ENCODE measurements at regions of chr9 and their contacts with region 1.

Region 1: GRCh38 chr9:114906908-114907571 is 23.4 kb downstream of the TNFSF8 start:
- DNase-seq: no peak
- H3K4me3 Mint-ChIP-seq: peak overlapping the region; percentile 67
- H3K27ac Mint-ChIP-seq: peak overlapping the region; percentile 97
- H3K4me1 Mint-ChIP-seq: peaks cover 55% of the 10 kb centered on the region
- H3K27me3 Mint-ChIP-seq: no peaks in the 10 kb centered on the region

Region 2: DNA sequence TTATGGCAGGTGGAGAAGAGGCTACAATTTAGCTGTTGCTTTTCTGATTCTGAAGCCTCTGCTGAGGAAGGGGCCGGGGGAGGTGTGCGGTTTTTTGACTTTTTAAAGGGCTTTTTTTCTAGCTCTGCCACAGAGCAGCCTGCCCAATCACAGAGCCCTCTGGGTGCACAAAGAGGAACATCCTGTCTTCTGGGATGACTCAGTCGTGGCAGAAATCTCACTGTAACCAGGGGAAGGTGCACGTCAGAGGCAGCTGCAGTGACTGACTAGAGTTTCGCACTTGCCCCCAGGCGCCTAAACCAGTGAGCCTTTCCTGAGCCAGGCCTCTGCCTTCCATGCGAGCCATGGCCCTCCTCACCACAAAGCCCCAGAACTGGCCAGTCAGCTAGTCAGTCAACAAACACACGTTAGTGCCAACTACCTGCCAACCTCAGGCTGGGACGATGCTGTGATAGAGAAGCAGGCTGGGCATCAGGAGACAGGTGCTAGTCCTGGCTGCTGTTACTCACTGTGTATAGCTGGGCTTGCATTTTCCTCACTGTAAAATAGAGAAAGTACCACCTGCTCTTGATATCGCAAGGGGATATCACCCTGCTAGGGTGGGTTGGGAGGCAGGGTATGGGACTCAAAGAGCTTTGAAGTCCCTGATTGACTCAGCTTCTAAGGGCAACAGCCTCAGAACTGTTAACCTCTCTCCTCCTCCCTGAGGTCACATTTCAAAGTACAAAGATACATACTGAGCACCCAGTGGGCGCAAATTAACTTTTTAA is 521.4 kb before region 1 on chr9:
- intact Hi-C with region 1: loop called (anchors 5 kb)
- DNase-seq: peak; percentile 89
- H3K4me3 Mint-ChIP-seq: peak overlapping the region; percentile 90
- H3K27ac Mint-ChIP-seq: peak overlapping the region; percentile 93
- H3K4me1 Mint-ChIP-seq: peaks cover 69% of the 10 kb centered on the region
- H3K27me3 Mint-ChIP-seq: no peaks in the 10 kb centered on the region

Region 3: DNA sequence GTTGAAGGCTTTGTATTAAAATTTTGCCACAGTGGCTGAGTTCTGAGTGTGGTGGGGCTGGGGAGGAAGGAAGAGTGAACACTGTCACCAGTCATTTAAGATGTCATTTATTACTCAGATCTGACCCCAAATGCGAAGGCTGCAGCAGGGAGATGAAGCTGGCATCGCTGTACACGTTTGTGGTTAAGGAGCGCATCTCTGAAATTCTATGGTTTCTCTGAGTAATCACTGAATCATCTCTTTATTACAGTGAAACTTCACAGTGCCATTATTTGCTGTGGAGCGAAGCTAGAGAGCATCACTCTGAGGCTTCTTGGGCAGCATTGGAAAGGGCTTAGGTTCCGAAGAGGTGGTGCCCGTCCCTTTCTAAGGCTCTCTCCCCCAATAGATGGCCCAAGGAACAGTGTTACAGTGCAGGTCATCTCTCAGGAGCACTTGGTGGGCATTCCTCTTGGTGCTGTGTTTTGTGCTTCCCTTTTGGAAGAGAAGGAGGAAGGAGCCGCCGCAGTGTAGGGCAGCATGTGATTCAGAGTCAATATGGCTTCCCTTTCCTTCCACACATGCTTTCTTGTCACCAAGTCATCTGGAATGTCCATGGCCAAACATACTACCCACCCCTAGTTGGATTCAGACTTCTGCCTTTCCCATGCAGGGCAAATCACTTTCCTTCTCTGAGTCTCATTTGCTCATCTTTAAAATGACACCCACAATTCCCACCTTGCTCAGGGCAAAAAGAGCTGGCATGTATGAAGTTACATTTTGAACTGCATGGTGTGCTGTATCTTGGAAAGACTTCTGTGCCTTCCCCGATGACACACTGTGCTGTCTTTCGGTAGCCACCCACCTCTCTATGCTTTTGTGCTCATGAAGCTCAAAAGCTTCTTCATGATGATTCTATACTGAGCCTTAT is 215.7 kb before region 1 on chr9:
- intact Hi-C with region 1: loop called (anchors 2 kb)
- DNase-seq: peak; percentile 80
- H3K4me3 Mint-ChIP-seq: peak overlapping the region; percentile 69
- H3K27ac Mint-ChIP-seq: peak overlapping the region; percentile 98
- H3K4me1 Mint-ChIP-seq: peaks cover 93% of the 10 kb centered on the region
- H3K27me3 Mint-ChIP-seq: no peaks in the 10 kb centered on the region

Region 4: GRCh38 chr9:114738581-114739316 is 168.3 kb before region 1 on chr9:
- intact Hi-C with region 1: loop called (anchors 1 kb)
- DNase-seq: peak; percentile 70
- H3K4me3 Mint-ChIP-seq: no peak overlapping the region
- H3K27ac Mint-ChIP-seq: peak overlapping the region; percentile 81
- H3K4me1 Mint-ChIP-seq: peaks cover 73% of the 10 kb centered on the region
- H3K27me3 Mint-ChIP-seq: no peaks in the 10 kb centered on the region

Region 5: DNA sequence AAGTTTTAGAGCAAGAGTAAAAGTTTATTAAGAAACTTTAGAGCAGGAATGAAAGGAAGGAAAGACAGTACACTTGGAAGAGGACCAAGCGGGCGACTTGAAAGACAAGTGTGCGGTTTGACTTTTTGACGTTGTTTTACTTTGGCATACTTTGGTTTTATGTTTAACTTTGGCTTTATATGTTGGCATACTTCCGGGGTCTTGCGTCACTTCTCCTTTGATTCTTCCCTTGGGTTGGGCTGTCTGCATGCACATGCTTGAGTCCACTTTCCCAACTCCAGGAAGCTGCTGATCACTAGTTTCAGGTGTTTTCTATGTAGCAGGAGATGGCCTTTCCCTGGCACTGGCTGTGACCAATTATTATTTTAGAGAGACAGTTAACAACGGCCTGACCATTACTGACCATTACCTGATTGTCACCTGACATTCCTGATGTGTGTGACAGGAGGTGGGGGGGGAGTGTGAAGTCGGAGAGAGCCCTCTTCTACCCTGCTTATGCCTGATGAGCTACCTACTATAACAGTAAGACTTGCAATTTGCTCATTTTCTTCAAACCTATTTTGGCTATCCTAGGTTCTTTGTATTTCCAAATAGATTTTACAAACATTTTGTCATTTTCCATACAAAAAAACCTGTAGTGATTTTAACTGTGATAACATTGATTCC is 22.1 kb before region 1 on chr9:
- intact Hi-C with region 1: no loop called
- DNase-seq: no peak
- H3K4me3 Mint-ChIP-seq: no peak overlapping the region
- H3K27ac Mint-ChIP-seq: no peak overlapping the region
- H3K4me1 Mint-ChIP-seq: peaks cover 22% of the 10 kb centered on the region
- H3K27me3 Mint-ChIP-seq: no peaks in the 10 kb centered on the region

Region 6: GRCh38 chr9:114919611-114920010 is 12.6 kb after region 1 on chr9:
- intact Hi-C with region 1: loop called (anchors 1 kb)
- DNase-seq: no peak
- H3K4me3 Mint-ChIP-seq: peak overlapping the region; percentile 63
- H3K27ac Mint-ChIP-seq: peak overlapping the region; percentile 64
- H3K4me1 Mint-ChIP-seq: peaks cover 94% of the 10 kb centered on the region
- H3K27me3 Mint-ChIP-seq: no peaks in the 10 kb centered on the region

Region 7: GRCh38 chr9:115008536-115009270 is 101.7 kb after region 1 on chr9:
- intact Hi-C with region 1: loop called (anchors 1 kb)
- DNase-seq: peak; percentile 23
- H3K4me3 Mint-ChIP-seq: no peak overlapping the region
- H3K27ac Mint-ChIP-seq: no peak overlapping the region
- H3K4me1 Mint-ChIP-seq: peaks cover 97% of the 10 kb centered on the region
- H3K27me3 Mint-ChIP-seq: no peaks in the 10 kb centered on the region

Region 8: GRCh38 chr9:115146581-115147021 is 239.6 kb after region 1 on chr9:
- intact Hi-C with region 1: no loop called
- DNase-seq: no peak
- H3K4me3 Mint-ChIP-seq: no peak overlapping the region
- H3K27ac Mint-ChIP-seq: no peak overlapping the region
- H3K4me1 Mint-ChIP-seq: peaks cover 26% of the 10 kb centered on the region
- H3K27me3 Mint-ChIP-seq: peaks cover 29% of the 10 kb centered on the region